Heart right ventricle (tissue), 16 donors: ENCODE measurements at regions of chr19 and their contacts with region 1.

Region 1: DNA sequence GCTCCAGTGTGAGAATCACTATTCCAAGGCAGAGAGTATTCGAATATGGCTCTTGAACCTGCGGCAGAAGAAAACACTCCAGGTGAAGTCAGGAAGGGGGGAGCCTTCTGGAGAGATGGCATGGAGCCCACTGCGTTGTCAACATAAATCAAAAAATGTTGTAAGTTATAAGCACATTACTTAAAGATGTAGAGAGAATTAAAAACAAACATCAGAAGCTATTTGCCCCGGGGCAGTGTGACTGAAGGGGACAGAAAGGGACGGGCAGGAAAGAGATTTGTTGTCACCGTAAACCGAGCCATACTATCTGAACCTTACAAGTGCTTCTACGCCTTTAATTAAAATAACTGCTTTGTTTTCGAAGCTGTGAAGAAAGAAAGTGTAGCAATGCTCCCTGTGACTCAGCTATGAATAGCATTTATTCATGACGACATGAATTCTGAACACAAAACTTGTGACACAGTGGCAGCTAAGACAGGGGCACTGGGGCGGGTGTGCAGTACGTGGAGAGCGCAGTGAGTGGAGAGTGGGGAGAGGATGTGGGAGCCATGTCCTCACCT is 30.1 kb downstream of the ZNF787 start:
- DNase-seq: no peak
- ATAC-seq: peak in 7 of 8 donors; percentile 21 to 82 (median 59)
- H3K4me3 ChIP-seq: peak overlapping the region in 3 of 10 donors; percentile 20 to 22 (median 21)
- H3K27ac ChIP-seq: peak overlapping the region in 9 of 10 donors; percentile 19 to 66 (median 50)
- H3K4me1 ChIP-seq: peaks cover 3 to 46% (median 19%) of the 10 kb centered on the region in 9 donors
- H3K27me3 ChIP-seq: no peaks in the 10 kb centered on the region
- CTCF ChIP-seq: no peak

Region 2: GRCh38 chr19:55931936-55932386 is 159.1 kb before region 1 on chr19 and contains the start of gene NLRP13:
- intact Hi-C with region 1: no loop called
- DNase-seq: no peak
- ATAC-seq: no peak
- H3K4me3 ChIP-seq: no peak within 1 kb of the TSS
- H3K27ac ChIP-seq: no peak within 1 kb of the TSS
- H3K4me1 ChIP-seq: no peaks in the 10 kb centered on the region
- H3K27me3 ChIP-seq: peaks cover 0 to 7% (median 0%) of the 10 kb centered on the region in 7 donors
- CTCF ChIP-seq: no peak
- total RNA-seq, gene NLRP13: not detected

Region 3: DNA sequence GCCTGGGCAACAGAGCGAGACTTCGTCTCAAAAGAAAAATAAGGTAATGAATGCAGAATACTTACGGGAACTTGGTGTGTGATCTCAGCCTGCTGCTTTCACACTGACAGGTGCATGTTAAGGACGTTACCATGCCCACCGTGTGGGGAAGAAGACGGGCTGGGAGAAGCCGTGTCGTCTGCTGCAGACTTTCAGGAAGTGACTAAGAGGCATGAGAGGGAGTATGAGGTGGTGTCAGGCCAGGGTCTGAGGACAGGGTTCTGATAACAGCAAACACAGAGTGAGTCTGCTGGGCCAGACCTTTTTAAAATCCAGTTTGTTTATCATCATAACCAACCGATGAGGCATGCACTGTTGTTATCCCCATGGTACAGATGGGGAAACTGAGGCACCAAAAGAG is 71.2 kb after region 1 on chr19:
- intact Hi-C with region 1: loop called in 1 of 10 experiments (anchors 5 kb)
- DNase-seq: no peak
- ATAC-seq: no peak
- H3K4me3 ChIP-seq: no peak overlapping the region
- H3K27ac ChIP-seq: no peak overlapping the region
- H3K4me1 ChIP-seq: peaks cover 0 to 3% (median 0%) of the 10 kb centered on the region in 9 donors
- H3K27me3 ChIP-seq: no peaks in the 10 kb centered on the region
- CTCF ChIP-seq: no peak